IMR-90 (cell line): ENCODE measurements at regions of chr4 and their contacts with region 1.

Region 1: DNA sequence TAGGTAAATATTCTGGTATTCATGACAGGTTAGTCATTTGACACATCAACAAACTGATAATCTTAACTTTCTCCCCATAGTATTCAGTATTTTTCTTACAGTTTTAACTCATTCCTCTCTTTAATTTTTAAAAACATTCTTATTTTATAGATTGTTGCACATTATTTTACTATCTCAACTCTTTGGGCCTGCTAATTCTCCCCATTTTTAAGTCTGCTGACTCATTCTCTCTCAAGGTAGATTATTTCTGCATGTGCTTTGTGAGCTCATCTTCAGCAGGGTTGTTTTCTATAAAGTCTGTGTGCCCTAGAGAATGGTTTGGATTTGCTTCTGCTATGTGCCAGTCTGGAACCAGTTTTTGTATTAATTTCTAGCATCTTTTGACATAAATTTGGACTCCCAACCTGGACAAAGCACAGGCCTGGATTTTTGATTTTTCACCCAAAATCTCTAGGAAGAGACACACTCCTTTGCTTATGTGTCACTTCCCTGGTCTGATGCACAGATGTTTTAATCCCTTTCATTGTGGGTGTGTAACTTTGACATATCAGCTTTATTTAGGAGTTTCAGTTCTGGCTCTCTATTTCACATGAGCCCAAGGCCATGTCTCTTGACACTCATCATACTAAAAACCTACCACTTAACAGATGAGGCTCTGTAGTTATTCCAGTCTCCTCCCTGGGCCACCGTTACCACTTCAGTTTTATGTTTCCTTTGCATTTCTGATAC is 194.3 kb upstream of the PGRMC2 start:
- DNase-seq: peak; percentile 15
- ATAC-seq: no peak
- H3K4me3 ChIP-seq: no peak overlapping the region
- H3K27ac ChIP-seq: no peak overlapping the region
- H3K4me1 ChIP-seq: peaks cover 4% of the 10 kb centered on the region; the same call in 1 of the 2 replicates
- H3K27me3 ChIP-seq: no peaks in the 10 kb centered on the region
- CTCF ChIP-seq: no peak
- POLR2A ChIP-seq: no peak
- RAD21 ChIP-seq: no peak

Region 2: DNA sequence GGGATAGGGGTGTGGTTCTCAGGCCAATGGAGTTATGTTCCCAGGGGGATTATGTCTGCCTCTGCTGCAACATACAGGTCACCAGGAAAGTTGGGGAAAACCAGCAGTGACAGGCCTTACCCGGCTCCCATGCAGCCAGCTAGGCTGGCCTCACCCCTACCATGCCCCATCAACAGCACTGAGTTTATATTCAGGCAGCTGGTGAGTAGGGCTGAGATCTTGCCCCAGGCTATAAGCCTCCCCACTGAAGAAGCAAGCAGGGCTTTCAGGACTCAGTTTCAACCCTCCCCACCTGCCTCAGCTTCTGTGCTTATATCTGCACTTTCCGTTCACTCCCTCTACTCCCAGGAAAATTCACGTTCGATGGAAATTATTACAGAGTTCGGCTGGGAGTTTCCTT is 71.9 kb before region 1 on chr4:
- CTCF ChIA-PET with region 1: no interaction called
- POLR2A ChIA-PET with region 1: no interaction called
- dilution Hi-C with region 1: no loop called
- in situ Hi-C with region 1: no loop called
- intact Hi-C with region 1: loop called (anchors 2 kb)
- DNase-seq: no peak
- ATAC-seq: no peak
- H3K4me3 ChIP-seq: no peak overlapping the region
- H3K27ac ChIP-seq: no peak overlapping the region
- H3K4me1 ChIP-seq: no peaks in the 10 kb centered on the region
- H3K27me3 ChIP-seq: no peaks in the 10 kb centered on the region
- CTCF ChIP-seq: no peak
- POLR2A ChIP-seq: no peak
- RAD21 ChIP-seq: no peak

Region 3: GRCh38 chr4:128571747-128572146 is 89.8 kb after region 1 on chr4:
- CTCF ChIA-PET with region 1: no interaction called
- POLR2A ChIA-PET with region 1: no interaction called
- dilution Hi-C with region 1: no loop called
- in situ Hi-C with region 1: no loop called
- intact Hi-C with region 1: no loop called
- DNase-seq: peak; percentile 96
- ATAC-seq: peak; percentile 56
- H3K4me3 ChIP-seq: no peak overlapping the region
- H3K27ac ChIP-seq: no peak overlapping the region
- H3K4me1 ChIP-seq: peaks cover 24% of the 10 kb centered on the region
- H3K27me3 ChIP-seq: no peaks in the 10 kb centered on the region
- CTCF ChIP-seq: no peak
- POLR2A ChIP-seq: no peak
- RAD21 ChIP-seq: no peak